Heart left ventricle (tissue), 16 donors: ENCODE measurements at regions of chr4 and their contacts with region 1.

Region 1: GRCh38 chr4:138035781-138036258 is 206.3 kb downstream of the SLC7A11 start:
- DNase-seq: no peak
- ATAC-seq: peak; percentile 64 to 94 (median 83)
- H3K4me3 ChIP-seq: no peak overlapping the region
- H3K27ac ChIP-seq: no peak overlapping the region
- H3K4me1 ChIP-seq: peaks cover 0 to 6% (median 0%) of the 10 kb centered on the region in 12 donors
- H3K27me3 ChIP-seq: no peaks in the 10 kb centered on the region
- CTCF ChIP-seq: peak; percentile 36 to 69 (median 60)
- POLR2A ChIP-seq: no peak

Region 2: GRCh38 chr4:138090150-138090917 is 54.5 kb after region 1 on chr4:
- intact Hi-C with region 1: loop called in 8 of 10 experiments (anchors 2 to 10 kb)
- DNase-seq: peak in 2 of 5 donors; percentile 42 to 43
- ATAC-seq: peak in 3 of 4 donors; percentile 74 to 86 (median 74)
- H3K4me3 ChIP-seq: peak overlapping the region in 3 of 12 donors; percentile 18 to 32 (median 28)
- H3K27ac ChIP-seq: no peak overlapping the region
- H3K4me1 ChIP-seq: peaks cover 0 to 14% (median 2%) of the 10 kb centered on the region in 12 donors
- H3K27me3 ChIP-seq: no peaks in the 10 kb centered on the region
- CTCF ChIP-seq: peak; percentile 69 to 89 (median 80)
- POLR2A ChIP-seq: no peak

Region 3: GRCh38 chr4:138182838-138183426 is 147.1 kb after region 1 on chr4:
- intact Hi-C with region 1: loop called (anchors 1 to 5 kb)
- DNase-seq: peak in 1 of 5 donors; percentile 8
- ATAC-seq: peak; percentile 39 to 80 (median 70)
- H3K4me3 ChIP-seq: no peak overlapping the region
- H3K27ac ChIP-seq: no peak overlapping the region
- H3K4me1 ChIP-seq: peaks cover 0 to 18% (median 1%) of the 10 kb centered on the region in 12 donors
- H3K27me3 ChIP-seq: no peaks in the 10 kb centered on the region
- CTCF ChIP-seq: peak; percentile 48 to 81 (median 69)
- POLR2A ChIP-seq: no peak

Region 4: GRCh38 chr4:138919094-138919936 is 883.5 kb after region 1 on chr4:
- intact Hi-C with region 1: loop called in 1 of 10 experiments (anchors 5 kb)
- DNase-seq: peak; percentile 31 to 84 (median 57)
- ATAC-seq: peak; percentile 71 to 96 (median 88)
- H3K4me3 ChIP-seq: peak overlapping the region in 5 of 12 donors; percentile 11 to 24 (median 17)
- H3K27ac ChIP-seq: no peak overlapping the region
- H3K4me1 ChIP-seq: peaks cover 0 to 3% (median 0%) of the 10 kb centered on the region in 12 donors
- H3K27me3 ChIP-seq: no peaks in the 10 kb centered on the region
- CTCF ChIP-seq: peak in 11 of 12 donors; percentile 42 to 90 (median 76)
- POLR2A ChIP-seq: no peak

Region 5: GRCh38 chr4:138938366-138938690 is 902.5 kb after region 1 on chr4:
- intact Hi-C with region 1: no loop called
- DNase-seq: no peak
- ATAC-seq: peak in 3 of 4 donors; percentile 45 to 69 (median 58)
- H3K4me3 ChIP-seq: no peak overlapping the region
- H3K27ac ChIP-seq: no peak overlapping the region
- H3K4me1 ChIP-seq: peaks cover 0 to 3% (median 0%) of the 10 kb centered on the region in 12 donors
- H3K27me3 ChIP-seq: no peaks in the 10 kb centered on the region
- CTCF ChIP-seq: peak in 11 of 12 donors; percentile 30 to 57 (median 44)
- POLR2A ChIP-seq: no peak